Psoas muscle (tissue), 8 donors: ENCODE measurements at regions of chr4 and their contacts with region 1.

Region 1: DNA sequence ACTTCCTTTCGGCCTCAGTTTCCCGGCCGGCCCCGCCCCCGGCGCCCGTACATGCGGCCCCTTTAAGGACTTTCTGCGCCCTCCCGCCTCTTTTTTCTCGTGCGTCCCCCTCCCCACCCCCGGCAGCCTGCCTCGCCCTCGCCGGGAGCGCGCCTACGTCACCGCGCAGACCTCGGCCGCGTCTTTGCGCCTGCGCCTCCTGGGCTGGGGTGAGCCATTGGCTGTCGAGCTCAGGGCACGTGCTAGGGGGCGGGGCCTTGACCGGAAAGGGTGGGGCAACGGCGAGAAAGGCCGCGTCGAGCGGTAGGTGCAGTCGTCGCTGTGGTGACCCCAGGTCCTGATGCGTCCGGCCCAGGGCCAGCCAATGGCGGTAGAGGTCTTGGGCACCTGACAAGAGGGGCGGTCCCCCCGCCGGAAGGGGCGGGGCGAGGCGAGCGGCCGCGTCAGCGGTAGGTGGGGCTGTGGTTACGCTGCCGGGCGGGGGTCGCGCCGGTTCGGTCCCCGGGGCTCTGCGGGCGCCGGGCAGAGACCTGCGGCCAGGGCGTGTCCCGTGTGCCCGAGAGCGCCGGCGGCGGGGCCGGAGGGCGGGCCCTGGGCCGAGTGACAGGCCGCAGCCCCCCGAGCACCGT is at the start of gene UVSSA:
- DNase-seq: peak; percentile 100
- ATAC-seq: peak; percentile 96 to 97 (median 96)
- H3K4me3 ChIP-seq: peak within 1 kb of the TSS; percentile 95
- H3K27ac ChIP-seq: peak within 1 kb of the TSS; percentile 100
- H3K4me1 ChIP-seq: peaks cover 15% of the 10 kb centered on the region
- H3K27me3 ChIP-seq: no peaks in the 10 kb centered on the region
- CTCF ChIP-seq: no peak
- total RNA-seq, gene UVSSA: 6.3 to 9.4 (median 8.3) TPM

Region 2: GRCh38 chr4:1249148-1249730 is 97.7 kb before region 1 on chr4:
- intact Hi-C with region 1: loop called (anchors 1 to 2 kb)
- DNase-seq: peak; percentile 90 to 93
- ATAC-seq: peak; percentile 69 to 74 (median 70)
- H3K4me3 ChIP-seq: peak overlapping the region; percentile 87
- H3K27ac ChIP-seq: peak overlapping the region; percentile 93
- H3K4me1 ChIP-seq: peaks cover 61% of the 10 kb centered on the region
- H3K27me3 ChIP-seq: no peaks in the 10 kb centered on the region
- CTCF ChIP-seq: no peak

Region 3: GRCh38 chr4:1289207-1290164 is 57.4 kb before region 1 on chr4 and contains the start of gene MAEA:
- intact Hi-C with region 1: loop called (anchors 5 kb)
- DNase-seq: peak; percentile 97 to 98
- ATAC-seq: peak; percentile 98 to 99 (median 99)
- H3K4me3 ChIP-seq: peak within 1 kb of the TSS; percentile 98
- H3K27ac ChIP-seq: peak within 1 kb of the TSS; percentile 95
- H3K4me1 ChIP-seq: peaks cover 26% of the 10 kb centered on the region
- H3K27me3 ChIP-seq: no peaks in the 10 kb centered on the region
- CTCF ChIP-seq: no peak
- total RNA-seq, gene MAEA: 26.7 to 39.6 (median 33.2) TPM

Region 4: GRCh38 chr4:1309261-1310010 is 37.5 kb before region 1 on chr4:
- intact Hi-C with region 1: loop called in 1 of 2 experiments (anchors 5 kb)
- DNase-seq: peak; percentile 90 to 94
- ATAC-seq: peak; percentile 91 to 96 (median 93)
- H3K4me3 ChIP-seq: peak overlapping the region; percentile 63
- H3K27ac ChIP-seq: peak overlapping the region; percentile 64
- H3K4me1 ChIP-seq: peaks cover 30% of the 10 kb centered on the region
- H3K27me3 ChIP-seq: no peaks in the 10 kb centered on the region
- CTCF ChIP-seq: no peak